AG04449 (cell line): ENCODE measurements at regions of chr16 and their contacts with region 1.

Region 1: DNA sequence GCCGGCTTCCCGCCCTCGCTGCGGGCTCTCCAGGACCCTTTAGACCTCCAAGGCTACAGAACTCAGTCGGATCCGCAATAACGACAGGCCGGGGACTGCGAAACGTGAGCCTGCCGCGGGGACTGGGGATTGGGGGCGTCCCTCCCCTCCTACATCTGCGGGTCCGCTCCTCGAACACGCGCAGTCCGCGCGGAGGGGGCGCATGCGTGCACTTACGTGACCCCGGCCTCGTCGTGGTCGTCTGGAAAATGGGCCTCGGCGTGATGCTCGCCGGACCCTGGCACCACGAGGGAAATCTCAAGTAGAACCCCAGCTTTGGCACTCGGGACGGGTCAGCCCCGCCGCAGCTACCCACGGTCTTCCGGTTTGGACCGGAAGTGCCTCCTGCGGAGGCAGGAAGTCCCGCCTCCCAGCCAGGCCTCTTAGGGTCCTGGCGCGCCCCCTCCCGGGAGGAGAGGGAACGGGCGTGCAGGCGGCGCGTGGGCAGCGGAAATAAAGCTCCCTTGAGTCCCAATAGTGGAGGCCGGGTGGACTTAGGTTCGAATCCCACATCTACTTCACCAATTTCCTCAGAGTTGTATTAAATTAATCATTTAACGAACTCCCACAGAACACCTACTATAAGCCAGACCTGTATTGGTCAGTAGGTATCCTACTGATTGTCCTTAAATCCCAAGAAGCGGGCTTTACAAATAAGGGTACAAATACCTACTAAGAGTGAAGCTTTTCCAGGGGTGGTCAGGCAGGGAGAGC is at the start of gene TAF1C:
- DNase-seq: peak; percentile 68
- H3K4me3 ChIP-seq: peak within 1 kb of the TSS; percentile 89
- CTCF ChIP-seq: peak; percentile 99

Region 2: GRCh38 chr16:84116720-84117493 is 70.0 kb before region 1 on chr16 and contains the start of gene MBTPS1:
- CTCF ChIA-PET with region 1: interaction called, 19 read pairs
- POLR2A ChIA-PET with region 1: no interaction called
- DNase-seq: peak; percentile 73
- H3K4me3 ChIP-seq: peak within 1 kb of the TSS; percentile 98
- CTCF ChIP-seq: no peak

Region 3: GRCh38 chr16:84166796-84167695 is 19.8 kb before region 1 on chr16:
- CTCF ChIA-PET with region 1: interaction called, 116 read pairs
- POLR2A ChIA-PET with region 1: no interaction called
- DNase-seq: no peak
- H3K4me3 ChIP-seq: no peak overlapping the region
- CTCF ChIP-seq: no peak

Region 4: GRCh38 chr16:84199861-84200260 is 13.0 kb after region 1 on chr16:
- CTCF ChIA-PET with region 1: interaction called, 25 read pairs
- POLR2A ChIA-PET with region 1: interaction called, 5 read pairs
- DNase-seq: no peak
- H3K4me3 ChIP-seq: no peak overlapping the region
- CTCF ChIP-seq: no peak